Colonic mucosa (tissue), 4 donors: ENCODE measurements at regions of chr5 and their contacts with region 1.

Region 1: GRCh38 chr5:157328277-157328912 is 62.5 kb downstream of the CYFIP2 start:
- DNase-seq: peak; percentile 49
- H3K4me3 ChIP-seq: no peak overlapping the region
- H3K27ac ChIP-seq: no peak overlapping the region
- H3K4me1 ChIP-seq: no peaks in the 10 kb centered on the region
- H3K27me3 ChIP-seq: no peaks in the 10 kb centered on the region
- CTCF ChIP-seq: peak; percentile 88

Region 2: DNA sequence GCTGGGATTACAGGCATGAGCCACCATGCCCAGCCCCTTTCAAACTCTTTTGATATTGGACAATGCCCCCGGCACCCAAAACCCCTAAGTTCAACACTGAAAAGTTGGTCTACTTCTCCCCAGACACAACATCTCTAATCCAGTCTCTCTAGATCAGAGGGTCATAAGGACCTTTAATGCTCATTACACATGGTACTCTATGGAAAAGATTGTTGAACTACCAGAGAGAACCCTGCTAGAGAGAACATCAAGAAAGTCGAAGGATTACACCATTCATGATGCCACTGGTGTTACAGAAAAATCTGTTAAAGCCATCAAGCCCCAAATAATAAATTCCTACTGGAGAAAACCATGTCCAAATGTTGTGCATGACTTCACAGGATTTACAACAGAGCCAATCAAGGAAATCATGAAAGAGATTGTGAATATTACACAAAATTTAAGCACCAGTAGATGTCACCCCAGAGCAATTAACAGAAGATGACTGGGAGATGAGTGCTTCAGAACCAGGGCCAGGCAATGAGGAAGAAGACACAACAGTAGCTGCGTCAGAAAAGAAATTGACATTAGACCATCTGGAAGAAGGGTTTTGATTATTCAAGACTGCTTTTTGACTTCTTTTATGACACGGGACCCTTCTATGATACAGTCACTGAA is 103.3 kb after region 1 on chr5:
- intact Hi-C with region 1: no loop called
- DNase-seq: peak; percentile 36
- H3K4me3 ChIP-seq: no peak overlapping the region
- H3K27ac ChIP-seq: no peak overlapping the region
- H3K4me1 ChIP-seq: no peaks in the 10 kb centered on the region
- H3K27me3 ChIP-seq: no peaks in the 10 kb centered on the region
- CTCF ChIP-seq: peak; percentile 32

Region 3: DNA sequence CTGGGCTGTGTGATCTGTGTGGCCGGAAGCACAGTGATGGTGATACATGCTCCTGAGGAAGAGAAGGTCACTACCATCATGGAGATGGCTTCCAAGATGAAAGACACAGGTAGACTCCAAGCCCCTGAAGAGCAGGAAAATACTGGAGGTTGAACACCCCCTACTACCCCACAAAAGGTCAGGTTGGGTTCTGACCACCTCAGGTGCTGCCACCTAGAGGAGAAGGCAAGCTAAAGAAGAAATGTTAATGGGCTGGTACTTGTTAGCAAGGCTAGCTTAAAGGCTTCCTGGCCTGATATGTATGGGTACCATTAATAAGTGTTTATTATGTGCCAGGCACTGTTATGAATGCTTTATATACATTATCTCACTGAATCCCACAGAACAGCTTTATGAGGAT is 143.3 kb after region 1 on chr5:
- intact Hi-C with region 1: loop called (anchors 5 kb)
- DNase-seq: no peak
- H3K4me3 ChIP-seq: no peak overlapping the region
- H3K27ac ChIP-seq: no peak overlapping the region
- H3K4me1 ChIP-seq: no peaks in the 10 kb centered on the region
- H3K27me3 ChIP-seq: no peaks in the 10 kb centered on the region
- CTCF ChIP-seq: peak; percentile 36